Transverse colon (tissue), 4 donors: ENCODE measurements at regions of chr9 and their contacts with region 1.

Region 1: GRCh38 chr9:133792721-133793470 is 54.7 kb upstream of the SARDH start:
- DNase-seq: peak; percentile 77
- H3K4me3 ChIP-seq: no peak overlapping the region
- H3K27ac ChIP-seq: no peak overlapping the region
- H3K4me1 ChIP-seq: peaks cover 4 to 31% (median 25%) of the 10 kb centered on the region in 4 donors
- H3K27me3 ChIP-seq: no peaks in the 10 kb centered on the region
- CTCF ChIP-seq: peak; percentile 92 to 97 (median 96)
- EP300 ChIP-seq: no peak
- POLR2A ChIP-seq: no peak

Region 2: GRCh38 chr9:134099123-134099787 is 306.4 kb after region 1 on chr9:
- in situ Hi-C with region 1: loop called in 2 of 4 experiments (anchors 25 kb)
- intact Hi-C with region 1: loop called (anchors 10 kb)
- DNase-seq: peak; percentile 60
- H3K4me3 ChIP-seq: no peak overlapping the region
- H3K27ac ChIP-seq: no peak overlapping the region
- H3K4me1 ChIP-seq: no peaks in the 10 kb centered on the region
- H3K27me3 ChIP-seq: no peaks in the 10 kb centered on the region
- CTCF ChIP-seq: peak; percentile 66 to 79 (median 74)
- EP300 ChIP-seq: no peak
- POLR2A ChIP-seq: no peak

Region 3: GRCh38 chr9:134123764-134124128 is 330.9 kb after region 1 on chr9:
- in situ Hi-C with region 1: loop called in 2 of 4 experiments (anchors 25 kb)
- intact Hi-C with region 1: no loop called
- DNase-seq: no peak
- H3K4me3 ChIP-seq: no peak overlapping the region
- H3K27ac ChIP-seq: no peak overlapping the region
- H3K4me1 ChIP-seq: no peaks in the 10 kb centered on the region
- H3K27me3 ChIP-seq: no peaks in the 10 kb centered on the region
- CTCF ChIP-seq: no peak
- EP300 ChIP-seq: no peak
- POLR2A ChIP-seq: no peak